WTC11 (cell line): ENCODE measurements at regions of chr3 and their contacts with region 1.

Region 1: DNA sequence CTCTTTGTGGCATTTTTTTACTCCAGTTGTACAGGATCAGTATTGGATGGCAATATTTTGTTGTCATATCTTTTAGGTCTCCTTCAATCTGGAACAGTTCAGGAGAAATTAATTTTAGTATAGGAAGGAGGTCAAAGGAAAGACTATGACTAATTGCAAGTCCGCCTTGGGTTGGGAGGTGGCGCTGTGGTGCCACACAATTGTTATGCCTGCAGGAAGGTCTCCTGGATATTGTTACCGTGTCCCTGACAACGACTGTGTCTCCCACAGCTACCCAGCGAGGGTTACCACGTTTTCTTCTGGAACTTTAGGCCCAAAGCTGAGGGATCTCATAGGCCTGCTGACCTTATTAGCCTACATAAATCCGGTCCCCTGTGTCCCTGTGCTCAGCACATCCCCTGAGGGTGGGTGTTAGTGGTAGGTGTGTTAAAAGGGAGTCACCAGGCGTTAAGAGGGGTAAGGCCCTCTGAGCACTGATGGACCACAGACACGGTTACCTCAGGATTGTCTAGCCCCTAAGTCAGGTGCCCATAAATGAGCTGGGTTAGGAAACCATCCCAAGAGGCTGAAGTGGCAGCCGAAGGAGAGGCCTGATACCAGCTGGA is 31.5 kb downstream of the KCNAB1 start:
- DNase-seq: peak; percentile 77
- ATAC-seq: peak; percentile 94
- H3K4me3 Mint-ChIP-seq: no peak overlapping the region
- H3K27ac Mint-ChIP-seq: no peak overlapping the region
- H3K4me1 Mint-ChIP-seq: peaks cover 12% of the 10 kb centered on the region
- H3K27me3 Mint-ChIP-seq: no peaks in the 10 kb centered on the region
- CTCF ChIP-seq: peak; percentile 84

Region 2: GRCh38 chr3:156044634-156044975 is 107.3 kb before region 1 on chr3:
- CTCF ChIA-PET with region 1: interaction called, 19 read pairs
- POLR2A ChIA-PET with region 1: no interaction called
- DNase-seq: no peak
- ATAC-seq: no peak
- H3K4me3 Mint-ChIP-seq: no peak overlapping the region
- H3K27ac Mint-ChIP-seq: no peak overlapping the region
- H3K4me1 Mint-ChIP-seq: peaks cover 17% of the 10 kb centered on the region
- H3K27me3 Mint-ChIP-seq: no peaks in the 10 kb centered on the region
- CTCF ChIP-seq: no peak

Region 3: GRCh38 chr3:156174229-156174847 is 22.4 kb after region 1 on chr3:
- CTCF ChIA-PET with region 1: interaction called, 11 read pairs
- POLR2A ChIA-PET with region 1: no interaction called
- DNase-seq: no peak
- ATAC-seq: peak; percentile 71
- H3K4me3 Mint-ChIP-seq: no peak overlapping the region
- H3K27ac Mint-ChIP-seq: no peak overlapping the region
- H3K4me1 Mint-ChIP-seq: no peaks in the 10 kb centered on the region
- H3K27me3 Mint-ChIP-seq: no peaks in the 10 kb centered on the region
- CTCF ChIP-seq: no peak

Region 4: GRCh38 chr3:156368189-156368588 is 216.3 kb after region 1 on chr3:
- CTCF ChIA-PET with region 1: interaction called, 12 read pairs
- POLR2A ChIA-PET with region 1: no interaction called
- DNase-seq: no peak
- ATAC-seq: no peak
- H3K4me3 Mint-ChIP-seq: no peak overlapping the region
- H3K27ac Mint-ChIP-seq: peak overlapping the region; percentile 85
- H3K4me1 Mint-ChIP-seq: peaks cover 66% of the 10 kb centered on the region
- H3K27me3 Mint-ChIP-seq: no peaks in the 10 kb centered on the region
- CTCF ChIP-seq: no peak

Region 5: GRCh38 chr3:156382458-156383346 is 230.8 kb after region 1 on chr3:
- CTCF ChIA-PET with region 1: interaction called, 50 read pairs
- POLR2A ChIA-PET with region 1: no interaction called
- DNase-seq: peak; percentile 70
- ATAC-seq: peak; percentile 92
- H3K4me3 Mint-ChIP-seq: no peak overlapping the region
- H3K27ac Mint-ChIP-seq: no peak overlapping the region
- H3K4me1 Mint-ChIP-seq: peaks cover 4% of the 10 kb centered on the region
- H3K27me3 Mint-ChIP-seq: peaks cover 7% of the 10 kb centered on the region
- CTCF ChIP-seq: peak; percentile 73

Region 6: GRCh38 chr3:156449712-156450574 is 298.0 kb after region 1 on chr3:
- CTCF ChIA-PET with region 1: interaction called, 23 read pairs
- POLR2A ChIA-PET with region 1: no interaction called
- DNase-seq: peak; percentile 18
- ATAC-seq: peak; percentile 79
- H3K4me3 Mint-ChIP-seq: no peak overlapping the region
- H3K27ac Mint-ChIP-seq: no peak overlapping the region
- H3K4me1 Mint-ChIP-seq: peaks cover 2% of the 10 kb centered on the region; the same call in 1 of the 2 replicates
- H3K27me3 Mint-ChIP-seq: no peaks in the 10 kb centered on the region; the same call in 1 of the 2 replicates
- CTCF ChIP-seq: peak; percentile 40

Region 7: GRCh38 chr3:156539802-156540201 is 387.9 kb after region 1 on chr3:
- CTCF ChIA-PET with region 1: interaction called, 13 read pairs
- POLR2A ChIA-PET with region 1: no interaction called
- DNase-seq: no peak
- ATAC-seq: no peak
- H3K4me3 Mint-ChIP-seq: no peak overlapping the region
- H3K27ac Mint-ChIP-seq: no peak overlapping the region
- H3K4me1 Mint-ChIP-seq: peaks cover 10% of the 10 kb centered on the region
- H3K27me3 Mint-ChIP-seq: no peaks in the 10 kb centered on the region
- CTCF ChIP-seq: no peak